K562 (cell line): ENCODE measurements at regions of chr12 and their contacts with region 1.

Region 1: GRCh38 chr12:127162902-127163301 is 1104.1 kb upstream of the TMEM132C start:
- DNase-seq: peak; percentile 22 to 79 (median 42)
- ATAC-seq: peak; percentile 55
- H3K4me3 ChIP-seq: no peak overlapping the region
- H3K27ac ChIP-seq: peak overlapping the region; percentile 44; the same call in 2 of the 3 replicates
- H3K4me1 ChIP-seq: peaks cover 16 to 39% of the 10 kb centered on the region in 2 experiments
- H3K27me3 ChIP-seq: no peaks in the 10 kb centered on the region
- CTCF ChIP-seq: no peak
- EP300 ChIP-seq: 0 out of 2 replicates have a peak, but pooled peaks have one; percentile 17
- POLR2A ChIP-seq: no peak
- RAD21 ChIP-seq: no peak

Region 2: GRCh38 chr12:126998747-126999285 is 164.1 kb before region 1 on chr12:
- CTCF ChIA-PET with region 1: no interaction called
- POLR2A ChIA-PET with region 1: no interaction called
- in situ Hi-C with region 1: no loop called
- intact Hi-C with region 1: loop called (anchors 5 kb)
- DNase-seq: peak; percentile 83 to 95 (median 88)
- ATAC-seq: peak; percentile 100
- H3K4me3 ChIP-seq: no peak overlapping the region
- H3K27ac ChIP-seq: peak overlapping the region; percentile 56; the same call in 2 of the 3 replicates
- H3K4me1 ChIP-seq: peaks cover 0 to 12% of the 10 kb centered on the region in 2 experiments; a peak in 2 of 5 replicates
- H3K27me3 ChIP-seq: no peaks in the 10 kb centered on the region
- CTCF ChIP-seq: no peak; a peak in 1 of 6 replicates
- EP300 ChIP-seq: peak; percentile 92
- POLR2A ChIP-seq: no peak
- RAD21 ChIP-seq: peak in 1 of 2 experiments; percentile 10; a peak in 2 of 4 replicates

Region 3: GRCh38 chr12:127035011-127035879 is 127.7 kb before region 1 on chr12:
- CTCF ChIA-PET with region 1: no interaction called
- POLR2A ChIA-PET with region 1: no interaction called
- in situ Hi-C with region 1: no loop called
- intact Hi-C with region 1: no loop called
- DNase-seq: no peak
- ATAC-seq: no peak
- H3K4me3 ChIP-seq: no peak overlapping the region
- H3K27ac ChIP-seq: no peak overlapping the region
- H3K4me1 ChIP-seq: no peaks in the 10 kb centered on the region
- H3K27me3 ChIP-seq: no peaks in the 10 kb centered on the region
- CTCF ChIP-seq: no peak
- EP300 ChIP-seq: no peak
- POLR2A ChIP-seq: no peak
- RAD21 ChIP-seq: no peak